Endothelial cell of umbilical vein (primary cell): ENCODE measurements at regions of chr20 and their contacts with region 1.

Region 1: DNA sequence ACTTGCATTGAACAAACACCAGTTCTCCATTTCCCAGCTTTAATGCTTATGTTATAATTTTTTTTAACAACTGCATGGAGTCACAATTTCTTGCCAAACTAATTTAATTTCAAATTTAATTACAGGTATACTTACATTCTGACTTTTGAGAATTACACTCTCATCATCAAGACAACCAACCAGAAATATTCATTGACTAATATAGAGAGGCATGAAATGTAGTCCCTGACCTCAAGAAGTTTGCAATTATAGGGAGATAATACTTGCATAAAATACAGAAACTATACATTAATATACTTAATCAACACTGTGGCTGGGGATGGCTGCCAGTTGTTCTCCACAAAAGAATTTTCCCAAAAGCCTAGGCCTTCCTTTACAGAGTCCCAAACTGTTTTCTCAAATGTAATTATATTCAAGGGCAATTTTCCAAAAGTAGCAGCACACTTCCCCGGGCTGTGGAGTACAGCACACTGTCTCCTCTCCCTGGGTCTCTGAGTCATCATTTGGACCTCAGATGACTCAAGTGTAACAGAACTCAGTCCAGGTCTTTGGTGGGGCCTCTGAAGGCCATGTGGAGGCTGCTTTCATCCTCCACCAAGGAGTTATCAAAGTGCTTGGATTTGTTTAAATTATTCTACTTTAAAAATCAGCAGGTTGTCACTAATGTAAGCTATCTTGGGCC is 114.1 kb downstream of the KIF16B start:
- DNase-seq: peak; percentile 29
- H3K4me3 ChIP-seq: no peak overlapping the region
- H3K27ac ChIP-seq: no peak overlapping the region
- H3K4me1 ChIP-seq: no peaks in the 10 kb centered on the region
- H3K27me3 ChIP-seq: no peaks in the 10 kb centered on the region
- CTCF ChIP-seq: no peak
- POLR2A ChIP-seq: no peak

Region 2: DNA sequence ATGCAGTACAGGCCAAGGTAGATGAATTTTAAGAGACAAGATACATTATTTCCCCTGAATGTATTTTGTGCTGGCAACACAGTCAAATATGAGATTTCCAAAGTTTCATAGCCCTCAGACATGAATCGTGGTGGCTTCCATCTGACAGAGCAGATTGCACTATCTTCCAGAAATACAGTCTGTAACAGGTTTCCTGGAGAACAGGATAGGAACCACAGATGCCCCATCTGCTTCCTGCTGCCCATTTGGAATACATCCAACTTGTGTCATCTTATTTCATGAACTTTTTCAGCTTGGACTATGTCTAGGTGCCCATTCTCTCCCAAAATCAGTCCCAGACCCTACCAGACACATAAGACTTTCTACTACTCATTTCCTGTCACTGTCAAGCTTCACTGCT is 311.9 kb before region 1 on chr20:
- CTCF ChIA-PET with region 1: no interaction called
- POLR2A ChIA-PET with region 1: no interaction called
- dilution Hi-C with region 1: no loop called
- intact Hi-C with region 1: loop called (anchors 10 kb)
- DNase-seq: no peak
- H3K4me3 ChIP-seq: no peak overlapping the region
- H3K27ac ChIP-seq: no peak overlapping the region
- H3K4me1 ChIP-seq: no peaks in the 10 kb centered on the region
- H3K27me3 ChIP-seq: no peaks in the 10 kb centered on the region
- CTCF ChIP-seq: no peak
- POLR2A ChIP-seq: no peak

Region 3: DNA sequence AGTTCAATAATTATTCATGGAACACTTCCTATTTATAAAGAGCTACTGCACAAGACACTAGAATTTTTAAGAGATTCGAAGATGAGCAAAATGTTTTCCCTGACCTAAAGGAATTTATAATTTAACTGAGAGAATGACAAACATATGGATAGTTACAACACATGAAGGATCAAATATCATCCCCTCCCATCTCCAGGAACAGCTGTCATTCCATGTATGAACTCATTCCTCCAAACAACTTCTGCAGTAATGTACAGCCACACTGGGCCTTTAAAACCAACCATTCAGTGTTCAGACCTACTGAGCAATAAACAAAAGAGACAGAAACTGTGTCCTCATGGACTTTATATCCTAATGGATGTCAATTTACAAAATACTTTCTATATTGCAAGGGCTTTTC is 26.2 kb after region 1 on chr20:
- CTCF ChIA-PET with region 1: no interaction called
- POLR2A ChIA-PET with region 1: no interaction called
- dilution Hi-C with region 1: no loop called
- intact Hi-C with region 1: no loop called
- DNase-seq: no peak
- H3K4me3 ChIP-seq: no peak overlapping the region
- H3K27ac ChIP-seq: no peak overlapping the region
- H3K4me1 ChIP-seq: no peaks in the 10 kb centered on the region
- H3K27me3 ChIP-seq: no peaks in the 10 kb centered on the region
- CTCF ChIP-seq: no peak
- POLR2A ChIP-seq: no peak